HepG2 (cell line): ENCODE measurements at regions of chr6 and their contacts with region 1.

Region 1: GRCh38 chr6:10510592-10511367 is 10.4 kb upstream of the GCNT2 start:
- DNase-seq: peak; percentile 76
- ATAC-seq: peak; percentile 95
- H3K4me3 ChIP-seq: peak overlapping the region; percentile 29 to 58 (median 35); a peak in 5 of 6 replicates
- H3K27ac ChIP-seq: no peak overlapping the region
- H3K4me1 ChIP-seq: peaks cover 26% of the 10 kb centered on the region
- H3K27me3 ChIP-seq: peaks cover 0 to 4% of the 10 kb centered on the region in 2 experiments; a peak in 1 of 5 replicates
- CTCF ChIP-seq: peak; percentile 95
- EP300 ChIP-seq: no peak
- POLR2A ChIP-seq: no peak
- RAD21 ChIP-seq: peak; percentile 81

Region 2: DNA sequence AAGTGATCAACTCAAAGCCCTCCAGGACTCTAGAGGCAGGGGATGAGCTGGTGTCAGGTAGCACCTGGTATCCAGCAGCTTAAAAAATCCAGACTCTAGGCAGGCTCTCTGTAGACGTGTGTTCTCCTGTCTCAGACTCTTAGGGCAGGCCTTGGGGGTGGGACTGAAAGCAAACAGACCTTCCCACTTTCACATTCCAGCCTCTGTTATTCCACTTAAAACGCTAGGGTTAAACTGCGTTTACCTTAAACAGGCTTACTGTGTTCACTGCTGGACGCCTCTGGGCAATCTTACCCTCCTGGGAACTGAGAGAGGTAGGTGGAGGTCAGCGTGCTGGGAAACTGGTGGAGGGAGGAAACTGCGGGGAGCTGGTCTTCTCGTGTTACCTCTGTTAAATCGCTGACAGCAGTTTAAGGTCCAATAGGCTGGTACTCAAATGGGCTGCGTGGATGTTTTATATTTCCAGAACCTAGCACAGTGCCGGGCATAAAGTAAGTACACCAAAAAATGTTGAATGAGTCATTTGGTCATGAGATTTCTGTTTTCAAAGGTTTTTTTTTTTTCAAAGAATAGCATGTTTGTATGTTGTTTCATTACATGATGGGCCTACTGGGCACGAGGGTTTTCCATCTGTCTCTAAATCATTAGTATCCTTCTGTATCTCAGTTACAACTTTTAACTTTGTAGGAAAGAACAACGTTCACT is 10.5 kb after region 1 on chr6 and contains the start of gene GCNT2:
- CTCF ChIA-PET with region 1: no interaction called
- POLR2A ChIA-PET with region 1: interaction called, 11 read pairs
- in situ Hi-C with region 1: no loop called
- intact Hi-C with region 1: loop called (anchors 1 kb)
- DNase-seq: peak; percentile 92
- ATAC-seq: peak; percentile 83
- H3K4me3 ChIP-seq: peak within 1 kb of the TSS; percentile 34 to 61 (median 50)
- H3K27ac ChIP-seq: peak within 1 kb of the TSS; percentile 30
- H3K4me1 ChIP-seq: peaks cover 42% of the 10 kb centered on the region
- H3K27me3 ChIP-seq: no peaks in the 10 kb centered on the region
- CTCF ChIP-seq: 0 out of 2 replicates have a peak, but pooled peaks have one; percentile 3
- EP300 ChIP-seq: no peak
- POLR2A ChIP-seq: peak in 1 of 2 experiments; percentile 52; a peak in 2 of 4 replicates
- RAD21 ChIP-seq: no peak
- total RNA-seq, gene GCNT2: 25.1 and 31.9 TPM in 2 replicates

Region 3: DNA sequence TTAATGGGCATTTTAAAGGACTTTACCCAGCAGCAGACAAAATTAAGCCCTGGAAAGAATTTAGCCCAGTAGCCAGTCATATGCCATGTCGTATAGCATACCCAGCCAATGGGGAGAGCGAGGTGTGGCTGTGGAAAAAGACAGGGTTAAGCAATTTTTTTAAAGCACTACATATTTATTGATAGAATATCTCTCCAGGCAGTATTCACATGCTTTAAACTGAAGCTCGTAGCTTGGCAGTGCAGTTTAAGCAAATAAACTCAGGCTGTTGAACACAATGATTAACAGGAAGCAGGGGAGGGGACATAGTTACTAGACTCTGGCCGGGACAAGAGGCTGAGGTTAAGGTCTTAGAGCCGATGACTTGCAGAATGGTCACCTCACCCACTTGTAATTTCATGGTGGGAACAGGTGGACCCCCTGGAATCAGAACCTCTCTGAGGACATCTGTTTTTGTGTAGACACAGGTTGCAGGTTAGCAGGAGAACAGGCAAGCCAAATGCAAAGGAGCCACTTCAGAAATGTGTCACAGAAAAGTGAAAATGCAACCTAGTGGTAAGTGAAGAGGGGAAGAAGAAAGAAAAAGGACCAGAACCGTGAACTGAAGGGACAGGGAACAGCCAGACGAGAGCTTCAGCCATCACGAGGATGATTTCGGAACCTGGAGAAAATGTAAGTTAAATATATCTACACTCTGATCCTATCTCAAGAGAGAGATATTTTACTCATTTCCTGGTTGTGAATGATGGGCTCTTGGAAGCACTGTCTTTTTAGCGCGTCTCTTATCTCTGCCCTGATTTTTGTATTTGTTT is 17.6 kb after region 1 on chr6:
- CTCF ChIA-PET with region 1: no interaction called
- POLR2A ChIA-PET with region 1: interaction called, 10 read pairs
- in situ Hi-C with region 1: no loop called
- intact Hi-C with region 1: loop called (anchors 2 kb)
- DNase-seq: peak; percentile 94
- ATAC-seq: peak; percentile 92
- H3K4me3 ChIP-seq: peak overlapping the region; percentile 72 to 79 (median 73)
- H3K27ac ChIP-seq: peak overlapping the region; percentile 90
- H3K4me1 ChIP-seq: peaks cover 40% of the 10 kb centered on the region
- H3K27me3 ChIP-seq: no peaks in the 10 kb centered on the region; a peak in 1 of 5 replicates
- CTCF ChIP-seq: no peak
- EP300 ChIP-seq: peak; percentile 48 to 64; a peak in 3 of 4 replicates
- POLR2A ChIP-seq: peak; percentile 63 to 96
- RAD21 ChIP-seq: no peak; the same call in 1 of the 2 replicates

Region 4: GRCh38 chr6:10609995-10610688 is 99.4 kb after region 1 on chr6:
- CTCF ChIA-PET with region 1: no interaction called
- POLR2A ChIA-PET with region 1: no interaction called
- in situ Hi-C with region 1: no loop called
- intact Hi-C with region 1: loop called (anchors 2 kb)
- DNase-seq: no peak
- ATAC-seq: no peak
- H3K4me3 ChIP-seq: no peak overlapping the region
- H3K27ac ChIP-seq: no peak overlapping the region
- H3K4me1 ChIP-seq: peaks cover 14% of the 10 kb centered on the region
- H3K27me3 ChIP-seq: no peaks in the 10 kb centered on the region; a peak in 1 of 5 replicates
- CTCF ChIP-seq: no peak
- EP300 ChIP-seq: no peak
- POLR2A ChIP-seq: no peak
- RAD21 ChIP-seq: no peak

Region 5: GRCh38 chr6:10800829-10801535 is 290.2 kb after region 1 on chr6:
- CTCF ChIA-PET with region 1: interaction called, 25 read pairs
- POLR2A ChIA-PET with region 1: no interaction called
- in situ Hi-C with region 1: no loop called
- intact Hi-C with region 1: loop called (anchors 1 kb)
- DNase-seq: peak; percentile 68
- ATAC-seq: peak; percentile 100
- H3K4me3 ChIP-seq: no peak overlapping the region
- H3K27ac ChIP-seq: no peak overlapping the region
- H3K4me1 ChIP-seq: peaks cover 7% of the 10 kb centered on the region; the same call in 1 of the 2 replicates
- H3K27me3 ChIP-seq: no peaks in the 10 kb centered on the region
- CTCF ChIP-seq: peak; percentile 95
- EP300 ChIP-seq: no peak
- POLR2A ChIP-seq: no peak
- RAD21 ChIP-seq: peak; percentile 87